ENCODE measurements at regions of chr6 and their contacts with region 1.

Region 1: GRCh38 chr6:98947351-98948292 is at the start of gene FBXL4:
- DNase-seq: peak; percentile 26 to 88
- H3K4me3 ChIP-seq: peak within 1 kb of the TSS; percentile 94 to 100
- H3K27ac ChIP-seq: peak within 1 kb of the TSS; percentile 74 to 94
- H3K4me1 ChIP-seq: peaks cover 5 to 6% of the 10 kb centered on the region in 2 donors
- H3K27me3 ChIP-seq: no peaks in the 10 kb centered on the region
- CTCF ChIP-seq: no peak
- total RNA-seq, gene FBXL4: 9.4 TPM

Region 2: GRCh38 chr6:98834060-98835031 is 113.3 kb before region 1 on chr6 and contains the start of gene POU3F2:
- intact Hi-C with region 1: loop called (anchors 2 kb)
- DNase-seq: peak in 1 of 2 donors; percentile 87
- H3K4me3 ChIP-seq: peak within 1 kb of the TSS; percentile 65 to 73
- H3K27ac ChIP-seq: peak within 1 kb of the TSS in 1 of 2 donors; percentile 38
- H3K4me1 ChIP-seq: peaks cover 5 to 30% of the 10 kb centered on the region in 2 donors
- H3K27me3 ChIP-seq: peaks cover 51% of the 10 kb centered on the region
- CTCF ChIP-seq: no peak
- total RNA-seq, gene POU3F2: not detected

Region 3: DNA sequence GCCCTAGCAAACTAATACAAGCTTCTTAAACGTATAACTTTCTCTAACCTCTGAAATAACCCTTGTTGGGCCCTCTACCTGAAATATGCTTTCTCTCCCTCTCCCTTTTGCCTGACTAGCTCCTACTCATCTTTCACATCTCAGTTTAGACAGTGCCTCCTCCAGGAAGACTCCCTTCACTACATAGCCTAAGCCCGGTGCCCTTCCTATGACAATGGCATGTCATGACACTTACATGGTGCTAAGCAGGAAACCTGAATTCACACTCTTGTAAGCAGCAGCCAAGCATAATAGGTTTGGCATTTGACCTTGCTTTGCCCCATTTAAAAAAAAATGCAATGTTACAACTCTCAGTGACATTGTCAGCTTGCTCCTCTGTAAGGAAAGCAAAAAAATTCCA is 33.2 kb after region 1 on chr6:
- intact Hi-C with region 1: loop called (anchors 5 kb)
- DNase-seq: no peak
- H3K4me3 ChIP-seq: no peak overlapping the region
- H3K27ac ChIP-seq: peak overlapping the region in 1 of 2 donors; percentile 12
- H3K4me1 ChIP-seq: peaks cover 0 to 20% of the 10 kb centered on the region in 2 donors
- H3K27me3 ChIP-seq: no peaks in the 10 kb centered on the region
- CTCF ChIP-seq: no peak

Region 4: GRCh38 chr6:99165838-99166237 is 218.2 kb after region 1 on chr6:
- intact Hi-C with region 1: no loop called
- DNase-seq: no peak
- H3K4me3 ChIP-seq: no peak overlapping the region
- H3K27ac ChIP-seq: no peak overlapping the region
- H3K4me1 ChIP-seq: no peaks in the 10 kb centered on the region
- H3K27me3 ChIP-seq: no peaks in the 10 kb centered on the region
- CTCF ChIP-seq: no peak

Region 5: GRCh38 chr6:99187429-99187828 is 239.8 kb after region 1 on chr6:
- intact Hi-C with region 1: no loop called
- DNase-seq: no peak
- H3K4me3 ChIP-seq: no peak overlapping the region
- H3K27ac ChIP-seq: no peak overlapping the region
- H3K4me1 ChIP-seq: no peaks in the 10 kb centered on the region
- H3K27me3 ChIP-seq: no peaks in the 10 kb centered on the region
- CTCF ChIP-seq: no peak

Measured in ascending aorta (tissue), 2 donors.